GM10248 (cell line): ENCODE measurements at regions of chr2 and their contacts with region 1.

Region 1: GRCh38 chr2:181104512-181105115 is 124.2 kb downstream of the UBE2E3 start:
- DNase-seq: no peak
- CTCF ChIP-seq: peak; percentile 77

Region 2: DNA sequence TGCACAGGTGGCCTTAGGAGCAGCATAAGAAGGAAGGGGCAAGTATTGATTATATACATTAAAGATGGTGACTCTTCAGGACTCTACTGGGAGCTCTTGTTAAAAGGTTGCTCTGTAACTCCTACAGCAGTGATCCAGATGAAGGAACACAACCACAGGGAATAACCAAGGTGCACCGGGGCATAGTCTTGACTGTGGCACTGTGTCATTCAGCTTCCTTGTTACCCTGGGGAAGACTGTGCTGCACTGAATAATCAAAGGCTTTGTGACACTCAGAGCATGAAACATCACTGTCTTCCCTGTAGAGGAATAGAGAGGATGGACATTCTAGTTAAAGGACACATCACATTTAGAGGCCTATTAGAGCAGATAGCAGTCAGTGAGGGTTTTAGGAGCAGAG is 18.9 kb before region 1 on chr2:
- CTCF ChIA-PET with region 1: interaction called, 11 read pairs
- POLR2A ChIA-PET with region 1: no interaction called
- DNase-seq: no peak
- CTCF ChIP-seq: no peak

Region 3: DNA sequence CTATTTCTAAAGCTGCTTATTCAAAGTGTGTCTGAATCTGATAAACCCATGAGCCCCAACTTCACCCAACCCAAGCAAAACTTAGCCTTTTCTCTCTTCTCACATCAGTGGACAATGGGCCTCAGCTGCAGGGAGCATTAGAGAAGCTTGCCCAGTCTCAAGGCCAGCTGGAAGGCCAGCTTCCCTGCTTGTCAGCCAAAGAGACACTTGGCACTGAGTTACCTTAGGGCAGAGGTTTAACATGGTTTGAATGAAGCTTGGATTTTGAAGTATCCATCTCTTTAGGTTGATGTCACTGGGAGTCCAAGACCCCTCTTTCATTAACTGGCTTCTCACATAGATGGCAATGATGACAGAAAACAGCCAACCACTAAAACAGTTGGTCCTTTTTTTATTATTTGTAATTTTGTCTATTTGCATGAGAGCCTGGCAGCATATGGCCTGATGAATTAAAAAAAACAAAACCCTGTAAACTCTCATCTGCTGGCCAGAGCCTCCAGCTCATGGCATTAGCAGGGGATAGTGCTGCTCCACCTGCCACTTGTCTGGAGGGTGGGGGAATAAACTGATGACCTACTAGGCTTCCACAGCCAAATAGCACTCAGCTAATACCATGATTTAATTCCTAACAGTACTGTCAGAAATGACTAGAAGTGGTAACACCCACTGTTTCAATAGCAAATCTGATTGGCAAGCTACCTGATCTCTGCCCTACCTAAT is 12.8 kb after region 1 on chr2:
- CTCF ChIA-PET with region 1: interaction called, 34 read pairs
- POLR2A ChIA-PET with region 1: no interaction called
- DNase-seq: no peak
- CTCF ChIP-seq: no peak

Region 4: GRCh38 chr2:181123798-181124231 is 19.2 kb after region 1 on chr2:
- CTCF ChIA-PET with region 1: interaction called, 22 read pairs
- POLR2A ChIA-PET with region 1: no interaction called
- DNase-seq: peak; percentile 56
- CTCF ChIP-seq: no peak

Region 5: GRCh38 chr2:181457121-181457740 is 352.6 kb after region 1 on chr2 and contains the start of gene ITGA4:
- CTCF ChIA-PET with region 1: interaction called, 11 read pairs
- POLR2A ChIA-PET with region 1: no interaction called
- DNase-seq: peak; percentile 83
- CTCF ChIP-seq: peak; percentile 92

Region 6: GRCh38 chr2:181466661-181467576 is 362.3 kb after region 1 on chr2:
- CTCF ChIA-PET with region 1: interaction called, 33 read pairs
- POLR2A ChIA-PET with region 1: no interaction called
- DNase-seq: no peak
- CTCF ChIP-seq: peak; percentile 83